ENCODE measurements at regions of chr2 and their contacts with region 1.

Region 1: GRCh38 chr2:127857265-127857808 is 618 bp downstream of the POLR2D start:
- DNase-seq: peak in 5 of 14 experiments; percentile 8 to 43 (median 14)
- ATAC-seq: peak; percentile 5
- H3K4me3 ChIP-seq: peak overlapping the region; percentile 92
- H3K4me3 Mint-ChIP-seq: peak overlapping the region; percentile 88
- H3K27ac ChIP-seq: peak overlapping the region; percentile 65 to 70
- H3K27ac Mint-ChIP-seq: peak overlapping the region; percentile 67
- H3K4me1 ChIP-seq: peaks cover 42% of the 10 kb centered on the region
- H3K4me1 Mint-ChIP-seq: peaks cover 49% of the 10 kb centered on the region
- H3K27me3 ChIP-seq: no peaks in the 10 kb centered on the region
- H3K27me3 Mint-ChIP-seq: no peaks in the 10 kb centered on the region
- CTCF ChIP-seq: no peak

Region 2: GRCh38 chr2:127810619-127811396 is 46.5 kb before region 1 on chr2 and contains the start of gene WDR33:
- CTCF ChIA-PET with region 1: no interaction called
- POLR2A ChIA-PET with region 1: interaction called, 13 read pairs
- intact Hi-C with region 1: loop called (anchors 1 to 2 kb)
- DNase-seq: peak; percentile 89 to 98 (median 93)
- ATAC-seq: peak; percentile 96
- H3K4me3 ChIP-seq: peak within 1 kb of the TSS; percentile 83
- H3K4me3 Mint-ChIP-seq: peak within 1 kb of the TSS; percentile 97
- H3K27ac ChIP-seq: peak within 1 kb of the TSS; percentile 95 to 97
- H3K27ac Mint-ChIP-seq: peak within 1 kb of the TSS; percentile 99
- H3K4me1 ChIP-seq: peaks cover 36% of the 10 kb centered on the region
- H3K4me1 Mint-ChIP-seq: peaks cover 54% of the 10 kb centered on the region
- H3K27me3 ChIP-seq: no peaks in the 10 kb centered on the region
- H3K27me3 Mint-ChIP-seq: no peaks in the 10 kb centered on the region
- CTCF ChIP-seq: no peak
- total RNA-seq, gene WDR33: 59.8 to 61.5 TPM

Region 3: DNA sequence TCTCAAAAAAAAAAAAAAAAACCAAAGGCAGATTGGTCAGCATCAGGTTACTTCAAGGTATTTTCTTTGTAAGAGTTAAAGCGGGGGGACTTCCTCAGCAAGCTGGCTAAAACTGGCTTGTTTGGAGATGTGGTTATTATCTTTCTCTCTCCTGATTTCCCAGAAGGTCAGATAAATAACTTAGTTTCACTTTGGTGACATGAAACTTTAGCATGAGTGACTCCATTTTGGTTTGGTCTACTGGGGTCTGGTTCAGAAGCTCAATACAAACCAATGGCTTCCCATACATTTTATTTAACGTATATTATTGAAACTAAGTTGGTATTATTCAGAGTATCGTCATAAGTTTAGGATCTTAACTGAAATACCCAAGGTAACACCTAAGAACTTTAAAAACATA is 70.0 kb after region 1 on chr2:
- CTCF ChIA-PET with region 1: no interaction called
- POLR2A ChIA-PET with region 1: no interaction called
- intact Hi-C with region 1: no loop called
- DNase-seq: no peak
- ATAC-seq: no peak
- H3K4me3 ChIP-seq: no peak overlapping the region
- H3K4me3 Mint-ChIP-seq: no peak overlapping the region
- H3K27ac ChIP-seq: no peak overlapping the region
- H3K27ac Mint-ChIP-seq: no peak overlapping the region
- H3K4me1 ChIP-seq: no peaks in the 10 kb centered on the region
- H3K4me1 Mint-ChIP-seq: no peaks in the 10 kb centered on the region
- H3K27me3 ChIP-seq: no peaks in the 10 kb centered on the region
- H3K27me3 Mint-ChIP-seq: no peaks in the 10 kb centered on the region
- CTCF ChIP-seq: no peak

Region 4: GRCh38 chr2:128027801-128028667 is 170.7 kb after region 1 on chr2 and contains the start of gene SAP130:
- CTCF ChIA-PET with region 1: no interaction called
- POLR2A ChIA-PET with region 1: interaction called, 4 read pairs
- intact Hi-C with region 1: loop called (anchors 2 to 10 kb)
- DNase-seq: peak; percentile 96 to 99 (median 98)
- ATAC-seq: peak; percentile 76
- H3K4me3 ChIP-seq: peak within 1 kb of the TSS; percentile 77
- H3K4me3 Mint-ChIP-seq: peak within 1 kb of the TSS; percentile 99
- H3K27ac ChIP-seq: peak within 1 kb of the TSS; percentile 85 to 89
- H3K27ac Mint-ChIP-seq: peak within 1 kb of the TSS; percentile 96
- H3K4me1 ChIP-seq: peaks cover 15% of the 10 kb centered on the region
- H3K4me1 Mint-ChIP-seq: peaks cover 30% of the 10 kb centered on the region
- H3K27me3 ChIP-seq: no peaks in the 10 kb centered on the region
- H3K27me3 Mint-ChIP-seq: no peaks in the 10 kb centered on the region
- CTCF ChIP-seq: no peak
- total RNA-seq, gene SAP130: 19.2 to 21.0 TPM

Measured in CD4-positive, alpha-beta T cell (primary cell).